ENCODE measurements at regions of chr2 and their contacts with region 1.

Region 1: GRCh38 chr2:233354971-233355574 is 779 bp downstream of the DGKD start:
- DNase-seq: peak; percentile 47 to 69 (median 60)
- ATAC-seq: peak; percentile 39
- H3K4me3 ChIP-seq: peak overlapping the region; percentile 5 to 22
- H3K27ac ChIP-seq: no peak overlapping the region
- H3K4me1 ChIP-seq: peaks cover 23% of the 10 kb centered on the region
- H3K27me3 ChIP-seq: no peaks in the 10 kb centered on the region
- CTCF ChIP-seq: no peak
- POLR2A ChIP-seq: peak in 2 of 3 donors; percentile 6 to 10

Region 2: DNA sequence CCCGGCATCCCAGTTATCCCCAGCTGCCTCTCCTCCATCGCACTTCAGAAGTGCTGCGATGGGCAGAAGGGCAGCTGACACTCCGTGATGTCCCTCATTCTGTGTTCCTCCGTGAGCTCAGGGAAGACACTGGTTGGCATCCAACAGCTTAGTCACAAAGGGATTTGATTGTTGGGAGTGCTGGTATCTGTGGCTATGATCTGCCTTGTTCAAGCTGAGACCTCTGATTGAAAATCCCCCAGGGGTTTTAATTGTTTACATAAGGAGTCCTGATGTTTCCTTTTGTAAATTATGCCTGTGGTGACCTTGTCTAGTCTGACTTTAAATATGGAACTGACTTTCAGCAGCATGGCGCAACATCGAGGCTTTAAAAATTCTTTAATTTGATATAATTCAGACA is 66.4 kb before region 1 on chr2:
- intact Hi-C with region 1: no loop called
- DNase-seq: no peak
- ATAC-seq: no peak
- H3K4me3 ChIP-seq: no peak overlapping the region
- H3K27ac ChIP-seq: no peak overlapping the region
- H3K4me1 ChIP-seq: no peaks in the 10 kb centered on the region
- H3K27me3 ChIP-seq: no peaks in the 10 kb centered on the region
- CTCF ChIP-seq: no peak
- POLR2A ChIP-seq: no peak

Region 3: DNA sequence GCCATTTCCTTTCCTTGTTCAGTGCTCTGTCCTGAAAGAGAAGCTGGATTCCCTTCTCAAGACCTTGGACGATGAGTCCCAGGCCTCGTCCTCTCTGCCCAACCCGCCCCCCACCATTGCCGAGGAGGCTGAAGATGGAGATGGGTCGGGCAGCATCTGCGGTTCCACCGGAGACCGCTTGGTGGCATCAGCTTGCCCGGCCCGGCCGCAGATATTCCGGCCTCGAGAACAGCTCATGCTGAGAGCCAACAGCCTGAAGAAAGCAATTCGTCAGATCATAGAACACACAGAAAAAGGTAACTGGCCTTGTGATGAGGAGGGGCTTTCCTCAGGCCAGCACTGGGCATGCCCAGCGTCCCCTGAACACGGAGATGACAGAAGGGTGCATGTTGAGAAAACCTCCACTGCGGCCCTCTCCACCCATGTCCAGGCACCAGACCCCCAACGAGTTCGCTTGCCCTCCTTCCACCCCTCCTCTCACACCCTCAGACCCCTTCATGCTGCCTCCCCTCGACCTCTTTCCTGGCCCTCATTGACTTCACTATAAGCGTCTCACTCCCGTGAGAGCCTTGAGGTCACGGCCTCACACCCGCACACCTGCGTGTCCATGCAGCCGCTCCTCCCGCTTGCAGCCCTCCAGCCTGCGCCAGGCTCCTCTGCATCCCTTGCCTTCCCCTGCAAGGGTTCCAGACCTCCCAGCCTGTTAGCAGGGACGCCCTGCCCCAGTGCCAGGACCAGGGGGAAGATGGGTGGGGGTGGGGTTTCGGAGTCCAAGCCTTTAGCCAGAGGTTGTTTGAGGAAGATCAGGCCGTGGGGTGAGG is 94.2 kb after region 1 on chr2:
- intact Hi-C with region 1: loop called (anchors 5 kb)
- DNase-seq: peak in 2 of 4 donors; percentile 36 to 43
- ATAC-seq: peak; percentile 36
- H3K4me3 ChIP-seq: no peak overlapping the region
- H3K27ac ChIP-seq: no peak overlapping the region
- H3K4me1 ChIP-seq: no peaks in the 10 kb centered on the region
- H3K27me3 ChIP-seq: no peaks in the 10 kb centered on the region
- CTCF ChIP-seq: peak in 6 of 7 experiments; percentile 20 to 45 (median 38)
- POLR2A ChIP-seq: no peak

Region 4: DNA sequence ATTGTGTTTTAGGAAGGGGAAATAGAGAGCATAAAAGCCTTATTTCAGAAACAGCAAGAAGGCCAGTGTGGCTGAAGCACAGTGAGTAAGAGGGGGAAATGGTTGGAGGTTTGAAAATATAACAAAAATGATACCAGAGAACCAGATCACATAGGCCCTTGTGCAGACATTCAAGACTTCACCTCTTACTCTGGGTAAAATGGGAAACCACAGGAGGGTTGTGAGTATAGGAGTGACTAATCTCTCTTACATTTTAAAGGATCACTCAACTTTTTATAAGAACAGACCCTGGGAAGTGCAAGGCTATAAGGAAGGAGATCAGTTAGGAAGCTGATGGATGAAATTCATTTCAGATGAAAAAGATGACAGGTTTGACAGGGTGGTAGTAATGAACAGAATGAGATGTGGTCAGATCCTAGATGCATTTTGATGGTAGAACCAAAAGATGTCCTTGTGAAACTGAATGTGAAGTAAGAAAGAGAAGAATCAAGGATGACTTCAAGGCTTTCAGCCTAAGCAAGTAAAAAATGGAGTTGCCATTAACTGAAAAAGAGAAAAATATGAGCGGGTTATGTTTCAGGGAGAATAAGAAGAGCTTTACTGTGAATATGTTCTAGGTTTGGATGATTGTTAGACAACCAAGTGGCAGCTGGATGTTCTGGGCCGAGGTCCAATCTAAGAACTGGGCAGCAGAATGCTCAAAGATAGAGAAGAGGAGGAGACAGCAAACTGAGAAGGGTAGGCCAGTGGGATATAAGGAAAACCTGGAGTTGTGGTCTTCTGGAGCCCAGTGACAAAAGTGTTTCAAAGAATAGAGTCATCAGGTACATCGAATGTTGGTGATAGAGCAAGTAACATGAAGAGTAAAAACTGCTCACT is 146.4 kb after region 1 on chr2:
- intact Hi-C with region 1: no loop called
- DNase-seq: no peak
- ATAC-seq: no peak
- H3K4me3 ChIP-seq: no peak overlapping the region
- H3K27ac ChIP-seq: no peak overlapping the region
- H3K4me1 ChIP-seq: no peaks in the 10 kb centered on the region
- H3K27me3 ChIP-seq: no peaks in the 10 kb centered on the region
- CTCF ChIP-seq: no peak
- POLR2A ChIP-seq: no peak